Heart left ventricle (tissue), 16 donors: ENCODE measurements at regions of chr3 and their contacts with region 1.

Region 1: GRCh38 chr3:775178-775885 is 317.5 kb upstream of the CNTN6 start:
- DNase-seq: no peak
- ATAC-seq: no peak
- H3K4me3 ChIP-seq: no peak overlapping the region
- H3K27ac ChIP-seq: no peak overlapping the region
- H3K4me1 ChIP-seq: no peaks in the 10 kb centered on the region
- H3K27me3 ChIP-seq: no peaks in the 10 kb centered on the region
- CTCF ChIP-seq: no peak
- POLR2A ChIP-seq: no peak

Region 2: DNA sequence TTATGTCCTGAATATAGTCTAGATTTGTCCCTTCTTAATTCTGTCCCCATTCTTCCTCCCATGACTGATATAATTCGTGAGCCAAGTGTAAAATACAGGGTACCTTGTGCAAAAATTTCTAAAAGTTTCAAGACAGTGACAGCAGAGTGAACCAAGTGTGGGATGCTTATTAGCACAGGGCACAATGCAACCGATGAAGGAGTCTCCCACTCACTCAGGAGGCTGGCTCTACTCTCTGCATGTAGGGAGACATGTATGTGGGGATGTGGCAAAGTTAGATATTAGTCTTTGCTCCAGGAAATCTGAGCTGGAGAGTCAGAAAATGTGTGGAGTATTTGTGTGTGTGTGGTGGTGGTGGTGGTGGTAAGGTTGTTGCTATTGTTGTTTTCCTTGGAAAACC is 272.8 kb before region 1 on chr3:
- intact Hi-C with region 1: loop called in 1 of 10 experiments (anchors 10 kb)
- DNase-seq: no peak
- ATAC-seq: no peak
- H3K4me3 ChIP-seq: no peak overlapping the region
- H3K27ac ChIP-seq: no peak overlapping the region
- H3K4me1 ChIP-seq: no peaks in the 10 kb centered on the region
- H3K27me3 ChIP-seq: no peaks in the 10 kb centered on the region
- CTCF ChIP-seq: no peak
- POLR2A ChIP-seq: no peak

Region 3: GRCh38 chr3:690770-691169 is 84.6 kb before region 1 on chr3:
- intact Hi-C with region 1: no loop called
- DNase-seq: no peak
- ATAC-seq: no peak
- H3K4me3 ChIP-seq: no peak overlapping the region
- H3K27ac ChIP-seq: no peak overlapping the region
- H3K4me1 ChIP-seq: no peaks in the 10 kb centered on the region
- H3K27me3 ChIP-seq: no peaks in the 10 kb centered on the region
- CTCF ChIP-seq: no peak
- POLR2A ChIP-seq: no peak

Region 4: GRCh38 chr3:732326-732928 is 42.9 kb before region 1 on chr3:
- intact Hi-C with region 1: no loop called
- DNase-seq: no peak
- ATAC-seq: no peak
- H3K4me3 ChIP-seq: no peak overlapping the region
- H3K27ac ChIP-seq: no peak overlapping the region
- H3K4me1 ChIP-seq: no peaks in the 10 kb centered on the region
- H3K27me3 ChIP-seq: no peaks in the 10 kb centered on the region
- CTCF ChIP-seq: no peak
- POLR2A ChIP-seq: no peak

Region 5: DNA sequence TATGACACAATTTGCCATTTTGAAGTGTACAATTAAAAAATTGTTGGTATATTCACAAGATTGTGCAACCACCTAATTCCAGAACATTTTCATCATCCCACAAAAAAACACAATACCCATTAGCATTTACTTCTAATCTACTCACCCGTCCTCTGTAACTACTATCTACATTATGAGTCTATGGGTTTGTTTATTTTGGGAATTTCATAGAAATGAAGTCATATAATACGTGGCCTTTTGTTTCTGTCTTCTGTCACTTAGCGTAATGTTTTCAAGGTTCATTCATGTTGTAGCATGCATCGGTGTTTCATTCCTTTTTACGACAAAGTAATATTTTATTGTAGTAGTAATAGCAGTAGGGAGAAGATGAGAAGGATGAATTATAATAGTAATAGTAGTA is 262.3 kb after region 1 on chr3:
- intact Hi-C with region 1: no loop called
- DNase-seq: no peak
- ATAC-seq: no peak
- H3K4me3 ChIP-seq: no peak overlapping the region
- H3K27ac ChIP-seq: no peak overlapping the region
- H3K4me1 ChIP-seq: no peaks in the 10 kb centered on the region
- H3K27me3 ChIP-seq: no peaks in the 10 kb centered on the region
- CTCF ChIP-seq: no peak
- POLR2A ChIP-seq: no peak